ENCODE measurements at regions of chr1 and their contacts with region 1.

Region 1: GRCh38 chr1:78617615-78618026 is 2.6 kb upstream of the IFI44L start:
- DNase-seq: peak; percentile 78
- ATAC-seq: peak; percentile 55
- H3K4me3 Mint-ChIP-seq: peak overlapping the region; percentile 42
- H3K27ac Mint-ChIP-seq: no peak overlapping the region
- H3K4me1 Mint-ChIP-seq: peaks cover 40% of the 10 kb centered on the region
- H3K27me3 Mint-ChIP-seq: peaks cover 14% of the 10 kb centered on the region

Region 2: DNA sequence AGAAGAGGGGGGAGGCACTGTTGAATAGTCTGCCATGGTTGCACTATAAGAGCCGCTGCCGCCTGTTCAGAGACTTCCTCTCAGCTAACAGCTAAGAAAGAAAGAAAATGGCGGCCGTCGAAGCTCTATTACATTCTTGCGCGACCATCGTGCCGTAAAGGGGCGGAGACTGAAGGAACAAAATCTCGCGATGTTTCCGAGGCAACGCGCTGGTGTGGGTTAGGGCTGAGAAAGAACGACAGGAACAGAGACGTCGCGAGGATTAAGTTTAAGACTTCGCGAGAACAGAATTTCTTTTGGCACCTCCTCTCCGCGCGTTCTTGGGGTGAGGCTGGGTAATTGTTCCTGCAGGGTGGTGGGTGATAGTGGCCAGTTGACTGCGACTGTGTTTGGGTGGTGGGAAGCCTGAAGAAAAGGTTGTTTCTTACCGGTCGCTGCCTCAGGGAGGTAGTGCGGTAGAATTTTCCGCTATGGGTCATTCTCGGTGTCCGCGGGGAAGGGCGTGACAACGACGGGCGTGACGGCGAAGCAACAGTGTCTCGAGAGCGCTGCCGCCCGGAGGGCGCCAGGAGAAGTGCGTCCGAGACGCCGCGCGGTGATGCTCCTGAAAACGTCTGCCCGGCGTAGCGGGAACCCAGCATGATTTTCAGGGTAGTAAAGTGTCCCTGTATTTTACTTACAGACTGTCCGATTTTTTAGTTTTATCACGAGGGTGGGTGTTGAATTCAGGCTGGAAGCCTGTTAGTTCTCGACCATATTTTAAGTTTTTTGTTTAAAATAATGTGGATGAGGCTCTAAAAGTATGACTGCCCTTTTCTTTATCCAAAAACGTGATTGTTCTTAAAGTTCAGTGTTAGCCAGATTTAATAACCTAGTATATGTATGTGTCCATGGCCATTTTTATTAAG is 638.4 kb before region 1 on chr1 and contains the start of gene FUBP1:
- CTCF ChIA-PET with region 1: no interaction called
- POLR2A ChIA-PET with region 1: interaction called, 33 read pairs
- DNase-seq: peak; percentile 98
- ATAC-seq: peak; percentile 84
- H3K4me3 Mint-ChIP-seq: no peak within 1 kb of the TSS
- H3K27ac Mint-ChIP-seq: no peak within 1 kb of the TSS
- H3K4me1 Mint-ChIP-seq: peaks cover 45% of the 10 kb centered on the region
- H3K27me3 Mint-ChIP-seq: no peaks in the 10 kb centered on the region
- total RNA-seq, gene FUBP1: 195 to 197 TPM

Region 3: DNA sequence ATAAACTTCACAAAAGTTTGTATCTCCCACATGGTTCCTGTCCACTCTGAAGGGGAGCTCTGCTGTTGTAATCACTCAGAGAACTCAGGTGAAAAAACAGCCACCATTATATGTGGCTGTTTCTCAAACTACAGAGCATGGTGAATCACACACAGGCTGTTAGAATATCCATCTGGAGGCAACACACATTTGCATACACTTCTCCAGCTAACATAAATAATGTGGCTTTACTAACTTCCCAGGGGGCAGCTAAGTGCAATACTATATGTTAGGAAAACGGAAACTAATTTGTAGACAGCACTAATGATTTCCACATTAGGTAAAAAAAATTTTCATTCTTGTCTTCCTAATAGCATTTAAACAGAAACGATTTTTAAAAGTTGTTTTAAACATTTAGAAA is 77.6 kb before region 1 on chr1:
- CTCF ChIA-PET with region 1: no interaction called
- POLR2A ChIA-PET with region 1: no interaction called
- DNase-seq: no peak
- ATAC-seq: no peak
- H3K4me3 Mint-ChIP-seq: no peak overlapping the region
- H3K27ac Mint-ChIP-seq: no peak overlapping the region
- H3K4me1 Mint-ChIP-seq: no peaks in the 10 kb centered on the region
- H3K27me3 Mint-ChIP-seq: peaks cover 4% of the 10 kb centered on the region

Region 4: GRCh38 chr1:78607334-78607927 is 10.2 kb before region 1 on chr1:
- CTCF ChIA-PET with region 1: interaction called, 20 read pairs
- POLR2A ChIA-PET with region 1: no interaction called
- DNase-seq: no peak
- ATAC-seq: no peak
- H3K4me3 Mint-ChIP-seq: no peak overlapping the region
- H3K27ac Mint-ChIP-seq: no peak overlapping the region
- H3K4me1 Mint-ChIP-seq: no peaks in the 10 kb centered on the region
- H3K27me3 Mint-ChIP-seq: peaks cover 26% of the 10 kb centered on the region

Region 5: GRCh38 chr1:78649628-78650027 is 32.0 kb after region 1 on chr1 and contains the start of gene IFI44:
- CTCF ChIA-PET with region 1: interaction called, 14 read pairs
- POLR2A ChIA-PET with region 1: interaction called, 32 read pairs
- DNase-seq: peak; percentile 82
- ATAC-seq: peak; percentile 92
- H3K4me3 Mint-ChIP-seq: peak within 1 kb of the TSS; percentile 94
- H3K27ac Mint-ChIP-seq: peak within 1 kb of the TSS; percentile 91
- H3K4me1 Mint-ChIP-seq: peaks cover 61% of the 10 kb centered on the region
- H3K27me3 Mint-ChIP-seq: no peaks in the 10 kb centered on the region
- total RNA-seq, gene IFI44: 158 to 165 TPM

Region 6: GRCh38 chr1:78664763-78665162 is 47.1 kb after region 1 on chr1:
- CTCF ChIA-PET with region 1: interaction called, 14 read pairs
- POLR2A ChIA-PET with region 1: interaction called, 3 read pairs
- DNase-seq: no peak
- ATAC-seq: no peak
- H3K4me3 Mint-ChIP-seq: no peak overlapping the region
- H3K27ac Mint-ChIP-seq: no peak overlapping the region
- H3K4me1 Mint-ChIP-seq: peaks cover 16% of the 10 kb centered on the region
- H3K27me3 Mint-ChIP-seq: no peaks in the 10 kb centered on the region

Region 7: DNA sequence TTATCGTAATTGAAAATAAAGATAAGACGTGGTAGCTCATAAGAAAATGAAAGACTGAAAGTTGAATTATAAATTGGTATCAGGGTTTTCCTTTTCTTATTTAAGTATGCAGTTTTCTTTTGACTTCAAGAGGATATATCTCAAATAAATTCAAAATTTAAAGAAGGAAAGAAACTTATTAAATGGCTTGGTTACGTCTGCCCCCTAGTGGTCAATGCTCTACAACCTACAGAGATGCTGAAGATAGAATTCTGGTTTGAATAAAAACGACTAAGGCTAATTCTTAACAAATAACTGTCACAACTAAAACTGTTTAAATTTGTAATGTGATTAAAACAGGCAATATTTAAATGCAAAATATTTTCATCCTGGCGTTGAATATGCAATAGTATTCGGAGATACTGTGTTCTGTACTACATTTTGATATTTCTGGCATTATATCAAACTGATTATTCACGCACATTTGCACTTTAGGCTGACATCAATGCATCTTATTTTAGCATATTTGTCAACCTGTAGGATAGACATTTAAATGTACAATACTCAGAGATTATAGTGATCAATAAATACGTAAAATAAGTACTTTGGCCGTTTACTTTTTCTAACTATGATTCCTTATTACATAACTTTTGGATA is 58.8 kb after region 1 on chr1:
- CTCF ChIA-PET with region 1: interaction called, 38 read pairs
- POLR2A ChIA-PET with region 1: interaction called, 11 read pairs
- DNase-seq: peak; percentile 77
- ATAC-seq: no peak
- H3K4me3 Mint-ChIP-seq: no peak overlapping the region
- H3K27ac Mint-ChIP-seq: no peak overlapping the region
- H3K4me1 Mint-ChIP-seq: peaks cover 31% of the 10 kb centered on the region
- H3K27me3 Mint-ChIP-seq: peaks cover 6% of the 10 kb centered on the region